ENCODE measurements at regions of chr11 and their contacts with region 1.

Region 1: DNA sequence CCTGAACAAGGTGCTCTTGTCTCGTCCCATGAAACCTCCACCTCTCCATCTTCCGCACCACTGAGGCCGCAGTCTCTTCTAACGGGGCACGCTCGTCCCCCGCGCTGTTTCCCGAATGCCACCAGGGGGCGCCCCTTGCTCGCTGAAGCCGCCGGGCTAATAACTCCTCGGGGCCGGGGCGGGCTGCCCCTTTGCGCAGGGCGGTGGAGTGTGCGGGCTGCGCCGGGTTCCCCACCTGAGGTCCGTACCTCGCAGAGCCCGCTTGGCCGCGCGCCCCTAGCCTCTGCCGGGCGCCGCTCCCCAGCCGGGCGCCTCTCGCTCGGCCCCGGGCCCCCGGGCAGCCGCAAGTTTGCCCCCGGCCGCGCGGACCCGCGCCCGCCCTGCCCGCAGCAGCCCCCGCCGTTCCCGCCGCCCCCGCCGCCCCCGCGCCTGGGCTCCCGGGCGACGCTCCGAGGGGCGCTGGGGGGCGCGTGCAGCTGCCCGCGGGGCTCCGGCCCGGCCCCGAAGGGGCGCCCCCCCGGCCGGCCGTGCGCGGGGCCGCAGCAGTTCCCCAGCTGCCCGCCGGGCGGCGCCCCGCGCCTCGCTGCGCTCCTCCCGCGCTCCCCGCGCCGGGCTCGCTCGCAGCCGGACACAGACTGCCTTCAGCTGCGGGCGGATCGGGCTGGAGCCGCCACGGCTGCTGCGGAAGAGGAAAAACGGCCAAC is at the start of gene GRIK4:
- DNase-seq: peak; percentile 88 to 95
- H3K4me3 ChIP-seq: peak within 1 kb of the TSS; percentile 55
- H3K4me3 Mint-ChIP-seq: peak within 1 kb of the TSS; percentile 53
- H3K27ac Mint-ChIP-seq: no peak within 1 kb of the TSS
- H3K4me1 ChIP-seq: no peaks in the 10 kb centered on the region
- H3K4me1 Mint-ChIP-seq: peaks cover 5% of the 10 kb centered on the region
- H3K27me3 ChIP-seq: peaks cover 2% of the 10 kb centered on the region; the same call in 1 of the 2 replicates
- H3K27me3 Mint-ChIP-seq: peaks cover 25% of the 10 kb centered on the region
- CTCF ChIP-seq: peak; percentile 98 to 99
- total RNA-seq, gene GRIK4: 2.0 and 3.6 TPM in 2 replicates

Region 2: GRCh38 chr11:120547811-120548681 is 36.8 kb after region 1 on chr11:
- CTCF ChIA-PET with region 1: interaction called, 6 read pairs
- POLR2A ChIA-PET with region 1: no interaction called
- intact Hi-C with region 1: loop called (anchors 1 kb)
- DNase-seq: peak in 1 of 2 experiments; percentile 45
- H3K4me3 ChIP-seq: no peak overlapping the region
- H3K4me3 Mint-ChIP-seq: no peak overlapping the region
- H3K27ac Mint-ChIP-seq: no peak overlapping the region
- H3K4me1 ChIP-seq: no peaks in the 10 kb centered on the region
- H3K4me1 Mint-ChIP-seq: peaks cover 5% of the 10 kb centered on the region
- H3K27me3 ChIP-seq: no peaks in the 10 kb centered on the region
- H3K27me3 Mint-ChIP-seq: no peaks in the 10 kb centered on the region
- CTCF ChIP-seq: peak; percentile 29 to 42

Region 3: DNA sequence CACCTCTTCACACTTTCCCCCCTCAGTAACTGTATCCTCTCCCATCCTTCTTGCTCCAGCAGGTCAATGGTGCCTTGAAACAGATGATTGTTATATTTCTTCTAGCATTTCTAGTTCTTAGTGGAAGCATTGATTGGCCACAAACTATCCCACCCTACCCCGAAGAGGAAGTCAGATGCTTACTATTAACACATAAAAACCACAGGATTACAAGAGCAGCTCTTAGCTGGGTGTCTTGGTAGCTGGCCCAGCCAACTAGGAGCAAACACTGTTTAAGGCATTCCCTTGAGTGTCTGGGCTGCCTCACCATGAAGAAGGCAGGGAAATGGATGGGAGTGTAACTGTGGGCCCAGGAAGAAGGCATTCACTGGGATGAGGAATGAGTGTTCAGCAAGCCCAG is 176.9 kb after region 1 on chr11:
- CTCF ChIA-PET with region 1: interaction called, 75 read pairs
- POLR2A ChIA-PET with region 1: no interaction called
- intact Hi-C with region 1: loop called (anchors 1 kb)
- DNase-seq: peak in 1 of 2 experiments; percentile 3
- H3K4me3 ChIP-seq: no peak overlapping the region
- H3K4me3 Mint-ChIP-seq: no peak overlapping the region
- H3K27ac Mint-ChIP-seq: no peak overlapping the region
- H3K4me1 ChIP-seq: no peaks in the 10 kb centered on the region
- H3K4me1 Mint-ChIP-seq: no peaks in the 10 kb centered on the region
- H3K27me3 ChIP-seq: no peaks in the 10 kb centered on the region
- H3K27me3 Mint-ChIP-seq: peaks cover 4% of the 10 kb centered on the region
- CTCF ChIP-seq: no peak

Region 4: GRCh38 chr11:120710354-120711131 is 199.3 kb after region 1 on chr11:
- CTCF ChIA-PET with region 1: no interaction called
- POLR2A ChIA-PET with region 1: no interaction called
- intact Hi-C with region 1: loop called (anchors 1 kb)
- DNase-seq: peak; percentile 91 to 94
- H3K4me3 ChIP-seq: no peak overlapping the region
- H3K4me3 Mint-ChIP-seq: no peak overlapping the region
- H3K27ac Mint-ChIP-seq: peak overlapping the region; percentile 14
- H3K4me1 ChIP-seq: peaks cover 26% of the 10 kb centered on the region
- H3K4me1 Mint-ChIP-seq: peaks cover 20% of the 10 kb centered on the region
- H3K27me3 ChIP-seq: no peaks in the 10 kb centered on the region
- H3K27me3 Mint-ChIP-seq: no peaks in the 10 kb centered on the region
- CTCF ChIP-seq: no peak

Region 5: GRCh38 chr11:120801801-120802689 is 290.8 kb after region 1 on chr11:
- CTCF ChIA-PET with region 1: no interaction called
- POLR2A ChIA-PET with region 1: no interaction called
- intact Hi-C with region 1: loop called (anchors 1 kb)
- DNase-seq: peak; percentile 78 to 85
- H3K4me3 ChIP-seq: no peak overlapping the region
- H3K4me3 Mint-ChIP-seq: no peak overlapping the region
- H3K27ac Mint-ChIP-seq: no peak overlapping the region
- H3K4me1 ChIP-seq: peaks cover under 1% of the 10 kb centered on the region; the same call in 1 of the 2 replicates
- H3K4me1 Mint-ChIP-seq: peaks cover 4% of the 10 kb centered on the region
- H3K27me3 ChIP-seq: no peaks in the 10 kb centered on the region
- H3K27me3 Mint-ChIP-seq: peaks cover 2% of the 10 kb centered on the region
- CTCF ChIP-seq: peak; percentile 96 to 99

Region 6: GRCh38 chr11:120929664-120930154 is 418.4 kb after region 1 on chr11:
- CTCF ChIA-PET with region 1: interaction called, 3 read pairs
- POLR2A ChIA-PET with region 1: no interaction called
- intact Hi-C with region 1: loop called (anchors 5 kb)
- DNase-seq: peak; percentile 77 to 81
- H3K4me3 ChIP-seq: no peak overlapping the region
- H3K4me3 Mint-ChIP-seq: no peak overlapping the region
- H3K27ac Mint-ChIP-seq: no peak overlapping the region
- H3K4me1 ChIP-seq: peaks cover 6% of the 10 kb centered on the region; the same call in 1 of the 2 replicates
- H3K4me1 Mint-ChIP-seq: peaks cover 10% of the 10 kb centered on the region
- H3K27me3 ChIP-seq: no peaks in the 10 kb centered on the region; the same call in 1 of the 2 replicates
- H3K27me3 Mint-ChIP-seq: peaks cover 5% of the 10 kb centered on the region
- CTCF ChIP-seq: peak; percentile 86 to 89

Region 7: DNA sequence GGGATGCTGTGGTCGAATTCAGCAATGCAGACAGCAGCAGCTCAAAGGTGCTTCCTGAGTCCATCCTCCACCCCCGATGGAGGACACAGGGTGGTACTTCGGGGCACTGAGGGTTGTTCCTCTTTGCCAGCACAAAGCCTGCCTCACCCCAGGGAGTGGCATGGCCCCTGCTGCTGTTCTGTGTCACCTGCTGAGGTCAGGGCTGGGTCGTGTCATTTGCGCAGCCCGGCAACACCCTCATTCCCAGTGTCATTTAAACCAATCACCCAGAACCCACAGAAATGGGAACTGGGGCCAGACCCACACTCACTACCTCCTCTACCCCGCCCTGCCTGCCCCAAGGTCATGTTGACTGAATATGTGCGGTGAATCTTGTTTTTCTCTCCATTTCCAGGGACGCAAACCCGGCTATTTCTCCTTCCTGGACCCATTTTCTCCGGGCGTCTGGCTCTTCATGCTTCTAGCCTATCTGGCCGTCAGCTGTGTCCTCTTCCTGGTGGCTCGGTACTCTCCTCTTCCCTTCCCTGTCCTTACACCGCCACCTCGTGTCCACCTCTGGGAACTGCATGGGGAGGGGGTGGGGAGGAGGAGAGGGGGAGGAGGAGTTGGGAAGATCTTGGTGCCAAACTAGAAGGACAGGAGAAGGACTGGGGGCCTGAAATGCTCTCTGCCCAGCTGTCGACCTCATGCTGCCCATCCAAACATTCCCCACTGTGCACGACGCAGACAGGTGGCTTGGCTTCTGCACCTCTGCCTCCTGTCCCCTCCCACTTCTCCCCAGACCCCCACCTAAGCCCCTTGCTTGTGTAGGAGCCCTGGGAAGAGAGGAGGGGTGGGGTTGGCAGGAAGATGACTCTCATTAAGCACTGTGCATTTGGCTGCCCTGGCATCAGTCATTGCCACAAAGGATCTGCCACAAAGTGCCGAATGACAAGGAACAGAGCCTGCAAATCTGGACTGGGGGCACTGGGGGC is 441.5 kb after region 1 on chr11:
- CTCF ChIA-PET with region 1: interaction called, 3 read pairs
- POLR2A ChIA-PET with region 1: no interaction called
- intact Hi-C with region 1: loop called (anchors 1 kb)
- DNase-seq: peak; percentile 91 to 93
- H3K4me3 ChIP-seq: peak overlapping the region; percentile 13; the same call in 1 of the 2 replicates
- H3K4me3 Mint-ChIP-seq: peak overlapping the region; percentile 67
- H3K27ac Mint-ChIP-seq: no peak overlapping the region
- H3K4me1 ChIP-seq: peaks cover 5% of the 10 kb centered on the region; the same call in 1 of the 2 replicates
- H3K4me1 Mint-ChIP-seq: peaks cover 7% of the 10 kb centered on the region
- H3K27me3 ChIP-seq: peaks cover 1% of the 10 kb centered on the region; the same call in 1 of the 2 replicates
- H3K27me3 Mint-ChIP-seq: peaks cover 10% of the 10 kb centered on the region
- CTCF ChIP-seq: peak; percentile 97 to 99